Activated CD8-positive, alpha-beta memory T cell treated with anti-CD3 and anti-CD28 coated beads, Interleukin-2, amount 10 ng/mL, durations not matched to agents 7 days and 5 days (primary cell): ENCODE measurements at regions of chr17 and their contacts with region 1.

Region 1: GRCh38 chr17:62109378-62109902 is 44.4 kb upstream of the MED13 start:
- DNase-seq: peak; percentile 86
- ATAC-seq: peak; percentile 100
- H3K4me3 Mint-ChIP-seq: no peak overlapping the region
- H3K27ac Mint-ChIP-seq: no peak overlapping the region
- H3K4me1 Mint-ChIP-seq: peaks cover 2% of the 10 kb centered on the region
- H3K27me3 Mint-ChIP-seq: no peaks in the 10 kb centered on the region

Region 2: DNA sequence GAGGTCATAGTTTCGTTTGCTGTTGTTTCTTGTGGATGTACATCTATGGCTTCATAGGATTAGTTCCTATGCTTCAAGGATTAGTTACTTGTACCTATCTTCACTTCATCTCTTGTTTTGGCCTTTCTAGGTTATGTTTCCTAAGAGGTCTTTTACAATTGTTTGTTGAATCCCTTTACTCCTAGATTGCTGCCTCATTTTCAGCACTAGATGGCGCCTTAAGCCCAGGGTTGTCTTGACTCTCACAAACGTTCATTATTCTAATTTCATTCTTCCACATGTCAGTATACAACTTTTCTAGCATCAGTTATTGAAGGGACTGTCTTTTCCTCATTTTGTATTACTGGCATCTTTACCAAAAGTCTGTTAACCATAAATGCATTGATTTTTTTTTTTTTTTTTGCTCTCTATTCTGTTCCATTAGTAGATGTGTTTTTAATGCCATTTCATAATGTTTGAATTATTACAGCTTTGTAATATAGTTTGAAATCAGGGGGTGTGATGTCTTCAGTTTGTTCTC is 473.5 kb before region 1 on chr17:
- CTCF ChIA-PET with region 1: interaction called, 18 read pairs
- DNase-seq: peak; percentile 76
- ATAC-seq: peak; percentile 42
- H3K4me3 Mint-ChIP-seq: no peak overlapping the region
- H3K27ac Mint-ChIP-seq: no peak overlapping the region
- H3K4me1 Mint-ChIP-seq: peaks cover 2% of the 10 kb centered on the region
- H3K27me3 Mint-ChIP-seq: peaks cover 73% of the 10 kb centered on the region

Region 3: GRCh38 chr17:62052757-62053338 is 56.6 kb before region 1 on chr17:
- CTCF ChIA-PET with region 1: interaction called, 10 read pairs
- DNase-seq: no peak
- ATAC-seq: no peak
- H3K4me3 Mint-ChIP-seq: no peak overlapping the region
- H3K27ac Mint-ChIP-seq: no peak overlapping the region
- H3K4me1 Mint-ChIP-seq: peaks cover 23% of the 10 kb centered on the region
- H3K27me3 Mint-ChIP-seq: no peaks in the 10 kb centered on the region

Region 4: GRCh38 chr17:62065598-62066468 is 43.6 kb before region 1 on chr17:
- CTCF ChIA-PET with region 1: interaction called, 19 read pairs
- DNase-seq: peak; percentile 99
- ATAC-seq: peak; percentile 94
- H3K4me3 Mint-ChIP-seq: peak overlapping the region; percentile 96
- H3K27ac Mint-ChIP-seq: peak overlapping the region; percentile 98
- H3K4me1 Mint-ChIP-seq: peaks cover 28% of the 10 kb centered on the region
- H3K27me3 Mint-ChIP-seq: no peaks in the 10 kb centered on the region

Region 5: GRCh38 chr17:62098623-62099231 is 10.7 kb before region 1 on chr17:
- CTCF ChIA-PET with region 1: interaction called, 14 read pairs
- DNase-seq: peak; percentile 47
- ATAC-seq: peak; percentile 60
- H3K4me3 Mint-ChIP-seq: no peak overlapping the region
- H3K27ac Mint-ChIP-seq: peak overlapping the region; percentile 16
- H3K4me1 Mint-ChIP-seq: peaks cover 28% of the 10 kb centered on the region
- H3K27me3 Mint-ChIP-seq: no peaks in the 10 kb centered on the region

Region 6: GRCh38 chr17:62121025-62121730 is 11.7 kb after region 1 on chr17:
- CTCF ChIA-PET with region 1: interaction called, 13 read pairs
- DNase-seq: no peak
- ATAC-seq: no peak
- H3K4me3 Mint-ChIP-seq: no peak overlapping the region
- H3K27ac Mint-ChIP-seq: peak overlapping the region; percentile 9
- H3K4me1 Mint-ChIP-seq: peaks cover 34% of the 10 kb centered on the region
- H3K27me3 Mint-ChIP-seq: peaks cover 11% of the 10 kb centered on the region